AG04449 (cell line): ENCODE measurements at regions of chr6 and their contacts with region 1.

Region 1: GRCh38 chr6:36885461-36886401 is at the start of gene C6orf89:
- DNase-seq: peak; percentile 77
- H3K4me3 ChIP-seq: peak within 1 kb of the TSS; percentile 86
- CTCF ChIP-seq: peak; percentile 81

Region 2: DNA sequence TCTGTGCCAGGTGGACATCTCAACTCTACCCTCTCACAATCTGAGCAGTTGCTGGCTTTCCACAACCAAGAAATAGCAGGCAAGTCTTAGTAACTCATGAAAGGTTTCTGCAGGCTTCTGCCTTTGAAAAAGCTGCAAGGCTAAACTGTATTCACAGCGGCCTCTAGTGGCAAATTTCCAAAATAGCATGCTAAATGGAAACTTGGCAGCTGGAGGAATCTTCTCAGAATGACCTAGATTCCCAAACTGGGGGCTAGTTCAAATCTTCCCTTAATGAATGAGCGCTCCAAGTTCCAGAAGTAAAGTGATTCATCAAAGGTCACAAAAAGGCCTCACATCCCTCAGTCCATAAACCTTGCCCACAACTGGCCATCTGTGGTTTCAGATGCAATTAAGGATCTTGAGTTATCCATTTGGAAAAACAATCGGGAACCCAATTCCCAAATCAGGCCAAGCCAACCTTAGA is 34.5 kb before region 1 on chr6:
- CTCF ChIA-PET with region 1: interaction called, 19 read pairs
- POLR2A ChIA-PET with region 1: no interaction called
- DNase-seq: peak; percentile 14
- H3K4me3 ChIP-seq: no peak overlapping the region
- CTCF ChIP-seq: peak; percentile 67

Region 3: GRCh38 chr6:36874443-36875249 is 11.1 kb before region 1 on chr6 and contains the start of gene PPIL1:
- CTCF ChIA-PET with region 1: interaction called, 118 read pairs
- POLR2A ChIA-PET with region 1: interaction called, 9 read pairs
- DNase-seq: peak; percentile 47
- H3K4me3 ChIP-seq: peak within 1 kb of the TSS; percentile 95
- CTCF ChIP-seq: no peak

Region 4: GRCh38 chr6:36906539-36907325 is 21.0 kb after region 1 on chr6:
- CTCF ChIA-PET with region 1: interaction called, 28 read pairs
- POLR2A ChIA-PET with region 1: no interaction called
- DNase-seq: no peak
- H3K4me3 ChIP-seq: no peak overlapping the region
- CTCF ChIP-seq: no peak

Region 5: DNA sequence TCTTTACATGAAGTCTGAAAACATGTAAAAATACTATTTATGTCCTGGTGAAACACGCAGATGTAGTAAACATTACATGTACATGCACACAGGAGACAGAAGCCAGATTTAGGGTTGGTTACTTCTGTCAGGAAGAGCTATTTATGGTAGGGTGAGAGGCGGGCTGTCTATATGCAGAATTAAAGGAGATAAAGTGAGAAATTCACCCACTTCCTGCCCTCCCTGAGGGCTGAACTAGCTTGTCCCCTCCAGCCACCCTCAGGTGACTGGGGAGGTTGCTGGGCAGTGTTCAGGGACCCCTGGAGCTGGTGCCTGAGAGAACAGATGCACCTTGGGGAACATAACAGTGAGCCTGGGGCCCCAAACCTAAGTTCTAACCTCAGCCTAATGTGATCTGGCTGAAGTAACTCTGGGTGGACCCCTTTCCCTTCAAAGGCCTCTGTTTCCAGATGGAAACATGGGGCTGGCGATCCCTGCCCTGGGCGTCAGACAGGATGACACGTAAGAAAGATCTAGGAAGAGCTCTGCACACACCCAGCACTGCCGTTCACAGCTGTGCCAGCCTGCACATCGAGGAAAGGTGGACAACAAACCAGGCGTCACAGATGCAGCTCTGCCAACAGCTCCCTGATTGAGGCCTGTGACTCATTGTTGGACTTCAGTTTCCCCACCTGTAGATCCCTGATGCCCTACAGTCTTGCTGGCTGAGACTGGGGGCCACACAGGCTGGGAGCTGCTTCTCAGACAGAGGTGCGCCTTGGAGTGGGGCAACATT is 70.1 kb after region 1 on chr6:
- CTCF ChIA-PET with region 1: interaction called, 16 read pairs
- POLR2A ChIA-PET with region 1: no interaction called
- DNase-seq: no peak
- H3K4me3 ChIP-seq: no peak overlapping the region
- CTCF ChIP-seq: no peak

Region 6: DNA sequence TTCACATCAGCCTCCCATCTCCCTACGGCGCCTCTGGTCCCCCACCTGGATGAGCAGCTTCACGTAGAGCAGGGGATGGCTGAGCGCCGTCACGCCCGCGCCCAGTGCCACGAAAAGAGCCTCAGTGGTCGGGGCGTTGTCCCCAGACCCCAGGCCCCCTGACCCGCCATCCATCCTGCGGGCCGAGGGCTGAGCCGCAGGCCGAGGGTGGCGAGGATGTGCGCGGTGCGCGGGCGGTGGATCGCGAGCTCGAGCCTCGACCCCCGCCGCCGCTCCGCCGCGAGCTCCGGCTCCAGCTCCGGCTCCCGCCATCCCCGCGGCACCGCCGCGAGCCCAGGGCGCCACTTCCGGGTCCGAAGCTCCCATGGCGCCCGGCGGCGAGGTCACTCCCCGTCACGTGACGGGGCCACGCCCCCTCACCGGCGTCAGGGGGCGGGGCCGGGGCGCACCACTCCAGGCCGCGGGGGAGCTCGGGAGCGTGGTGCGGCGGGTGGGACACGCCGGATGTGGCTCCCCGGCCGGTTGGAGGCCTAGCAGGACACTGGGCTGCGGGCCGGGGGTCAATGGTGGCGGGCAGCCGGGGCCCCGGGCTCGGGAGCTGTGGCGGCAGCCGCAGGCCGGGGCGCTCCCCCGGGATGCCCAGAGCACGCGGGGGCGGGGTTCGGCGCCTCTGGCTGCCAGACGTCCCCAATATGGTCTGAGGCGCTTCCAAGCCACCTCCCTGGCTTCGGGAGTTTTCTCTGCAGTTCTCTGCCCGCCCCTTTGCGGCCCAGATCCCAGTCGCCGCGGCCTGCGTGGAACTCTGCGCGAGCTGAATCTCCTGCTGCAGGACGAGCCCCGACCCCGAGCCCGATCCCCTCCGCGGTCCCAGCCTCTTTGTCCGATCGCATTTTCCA is 100.3 kb after region 1 on chr6 and contains the start of gene MTCH1:
- CTCF ChIA-PET with region 1: interaction called, 87 read pairs
- POLR2A ChIA-PET with region 1: interaction called, 6 read pairs
- DNase-seq: peak; percentile 19
- H3K4me3 ChIP-seq: peak within 1 kb of the TSS; percentile 99
- CTCF ChIP-seq: no peak